Activated CD4-positive, alpha-beta memory T cell treated with anti-CD3 and anti-CD28 coated beads for 36 hours (primary cell): ENCODE measurements at regions of chr15 and their contacts with region 1.

Region 1: DNA sequence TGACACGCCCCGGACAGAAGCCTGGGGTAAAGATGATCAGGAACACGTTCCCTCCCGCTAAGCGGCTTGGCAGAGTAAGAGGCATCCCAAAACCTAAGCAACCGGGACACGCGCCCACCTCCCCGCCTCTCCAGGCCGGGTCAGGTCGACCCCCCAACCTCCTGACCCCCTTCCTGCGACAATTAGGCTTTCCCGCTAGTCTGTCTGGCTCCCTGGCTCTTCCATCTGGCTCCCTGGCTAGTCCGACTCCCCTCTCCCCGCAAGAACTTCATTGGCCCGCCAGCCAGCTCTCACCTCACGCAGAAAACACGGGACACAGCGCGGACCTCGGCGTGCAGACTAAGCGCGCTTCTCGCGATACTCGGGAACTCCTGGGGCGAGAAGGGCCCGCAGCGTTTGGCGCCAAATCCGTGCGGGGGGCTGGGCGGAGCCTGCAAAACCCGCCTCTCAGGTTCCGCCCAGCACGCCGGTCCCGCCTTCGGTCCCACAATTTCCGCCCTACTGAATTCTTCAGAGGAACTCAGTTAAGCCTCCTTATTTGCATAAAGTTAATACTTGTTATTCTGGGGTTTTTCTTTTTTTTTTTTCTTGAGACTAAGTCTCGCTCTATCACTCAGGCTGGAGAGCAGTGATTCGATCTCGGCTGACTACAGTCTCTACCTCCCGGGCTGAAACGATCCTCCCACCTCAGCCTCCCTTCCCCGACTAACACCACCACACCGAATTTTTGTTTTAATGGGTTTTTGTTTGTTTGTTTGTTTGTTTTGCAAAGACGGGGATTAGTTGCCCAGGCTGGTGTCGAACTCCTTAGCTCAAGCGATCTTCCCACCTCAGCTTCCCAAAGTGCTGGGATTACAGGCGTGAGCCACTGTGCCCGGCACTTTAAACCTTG is at the start of gene TIPIN:
- DNase-seq: peak; percentile 99
- H3K4me3 Mint-ChIP-seq: peak within 1 kb of the TSS; percentile 93
- H3K27ac Mint-ChIP-seq: peak within 1 kb of the TSS; percentile 91
- H3K4me1 Mint-ChIP-seq: peaks cover 25% of the 10 kb centered on the region
- H3K27me3 Mint-ChIP-seq: no peaks in the 10 kb centered on the region
- total RNA-seq, gene TIPIN: 43.2 to 45.9 TPM

Region 2: DNA sequence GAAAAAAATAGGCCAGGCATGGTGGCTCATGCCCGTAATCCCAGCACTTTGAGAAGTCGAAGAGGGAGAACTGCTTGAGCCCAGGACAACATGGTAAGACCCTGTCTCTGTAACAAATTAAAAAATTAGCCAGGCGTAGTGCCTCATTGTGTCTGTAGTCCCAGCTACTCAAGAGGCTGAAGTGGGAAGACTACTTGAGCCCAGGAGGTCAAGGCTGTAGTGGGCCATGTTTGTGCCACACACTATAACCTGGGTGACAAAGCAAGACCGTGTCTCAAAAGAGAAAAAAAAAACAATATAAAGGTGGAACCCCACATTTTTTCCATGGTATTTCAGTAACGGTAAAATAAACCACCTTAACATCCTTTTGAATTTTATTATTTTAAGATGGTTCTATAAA is 634.4 kb before region 1 on chr15:
- CTCF ChIA-PET with region 1: no interaction called
- POLR2A ChIA-PET with region 1: no interaction called
- intact Hi-C with region 1: no loop called
- DNase-seq: no peak
- H3K4me3 Mint-ChIP-seq: no peak overlapping the region
- H3K27ac Mint-ChIP-seq: no peak overlapping the region
- H3K4me1 Mint-ChIP-seq: no peaks in the 10 kb centered on the region
- H3K27me3 Mint-ChIP-seq: no peaks in the 10 kb centered on the region

Region 3: DNA sequence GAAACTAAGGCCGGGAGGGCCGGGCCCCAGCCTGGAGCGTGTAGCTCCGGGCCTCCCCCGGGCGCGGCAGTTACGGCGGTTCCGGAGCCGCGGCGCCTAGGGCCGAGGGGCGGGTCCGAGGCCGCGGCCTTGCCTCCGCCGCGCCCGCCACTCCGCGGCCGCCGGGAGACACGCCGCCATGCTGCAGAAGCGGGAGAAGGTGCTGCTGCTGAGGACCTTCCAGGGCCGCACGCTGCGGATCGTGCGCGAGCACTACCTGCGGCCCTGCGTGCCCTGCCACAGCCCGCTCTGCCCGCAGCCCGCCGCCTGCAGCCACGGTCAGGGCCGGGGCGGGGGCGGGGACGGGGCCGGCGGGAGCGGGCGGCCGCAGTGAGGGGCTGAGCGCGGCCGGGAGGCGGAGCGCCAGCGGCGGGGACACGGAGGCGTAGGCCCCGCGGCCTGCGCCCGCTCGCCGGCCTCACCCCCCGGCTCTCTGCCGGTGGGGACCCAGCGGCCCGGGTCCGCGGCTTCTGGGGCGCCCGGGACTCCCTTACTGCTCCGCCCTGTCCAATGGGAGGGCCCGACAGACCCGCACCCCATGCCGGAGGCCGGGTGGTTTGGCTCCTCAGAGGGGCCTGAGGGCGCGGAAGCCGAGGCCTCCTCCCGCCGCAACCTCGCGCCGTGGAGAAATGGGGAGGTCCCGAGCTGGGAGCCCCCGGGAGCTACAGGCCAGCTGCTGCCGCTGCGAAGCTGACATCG is 63.0 kb before region 1 on chr15 and contains the start of gene DIS3L:
- CTCF ChIA-PET with region 1: no interaction called
- POLR2A ChIA-PET with region 1: interaction called, 4 read pairs
- intact Hi-C with region 1: loop called (anchors 5 kb)
- DNase-seq: peak; percentile 68
- H3K4me3 Mint-ChIP-seq: peak within 1 kb of the TSS; percentile 84
- H3K27ac Mint-ChIP-seq: peak within 1 kb of the TSS; percentile 89
- H3K4me1 Mint-ChIP-seq: peaks cover 39% of the 10 kb centered on the region
- H3K27me3 Mint-ChIP-seq: no peaks in the 10 kb centered on the region
- total RNA-seq, gene DIS3L: 23.5 to 26.3 TPM

Region 4: GRCh38 chr15:66369773-66370651 is 13.4 kb after region 1 on chr15:
- CTCF ChIA-PET with region 1: no interaction called
- POLR2A ChIA-PET with region 1: interaction called, 7 read pairs
- intact Hi-C with region 1: loop called (anchors 1 kb)
- DNase-seq: peak; percentile 66
- H3K4me3 Mint-ChIP-seq: peak overlapping the region; percentile 69
- H3K27ac Mint-ChIP-seq: peak overlapping the region; percentile 98
- H3K4me1 Mint-ChIP-seq: peaks cover 15% of the 10 kb centered on the region
- H3K27me3 Mint-ChIP-seq: no peaks in the 10 kb centered on the region

Region 5: DNA sequence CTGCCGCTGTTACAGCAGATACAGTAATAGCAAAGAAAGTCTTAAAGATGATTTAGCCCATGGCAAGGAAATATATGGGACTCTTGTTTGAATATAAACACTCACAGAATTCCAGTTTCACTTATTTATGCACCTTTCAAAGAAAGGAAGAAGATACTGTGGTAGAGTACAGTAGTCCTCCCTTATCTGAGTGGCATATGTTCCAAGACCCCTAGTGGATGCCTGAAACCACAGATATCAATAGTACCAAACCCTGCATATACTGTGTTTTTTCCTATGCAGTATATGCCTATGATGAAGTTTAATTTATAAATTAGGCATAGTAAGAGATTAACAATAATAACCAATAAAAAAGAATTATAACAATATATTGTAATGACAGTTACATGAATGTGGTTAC is 38.3 kb after region 1 on chr15:
- CTCF ChIA-PET with region 1: no interaction called
- POLR2A ChIA-PET with region 1: no interaction called
- intact Hi-C with region 1: no loop called
- DNase-seq: no peak
- H3K4me3 Mint-ChIP-seq: no peak overlapping the region
- H3K27ac Mint-ChIP-seq: no peak overlapping the region
- H3K4me1 Mint-ChIP-seq: peaks cover 74% of the 10 kb centered on the region
- H3K27me3 Mint-ChIP-seq: no peaks in the 10 kb centered on the region

Region 6: GRCh38 chr15:66504563-66505429 is 148.2 kb after region 1 on chr15 and contains the starts of genes RPL4 and ZWILCH:
- CTCF ChIA-PET with region 1: interaction called, 43 read pairs
- POLR2A ChIA-PET with region 1: interaction called, 3 read pairs
- intact Hi-C with region 1: loop called (anchors 2 kb)
- DNase-seq: peak; percentile 82
- H3K4me3 Mint-ChIP-seq: peak within 1 kb of the TSS; percentile 95
- H3K27ac Mint-ChIP-seq: peak within 1 kb of the TSS; percentile 95
- H3K4me1 Mint-ChIP-seq: peaks cover 49% of the 10 kb centered on the region
- H3K27me3 Mint-ChIP-seq: no peaks in the 10 kb centered on the region
- total RNA-seq, gene RPL4: 5,151 to 5,211 TPM
- total RNA-seq, gene ZWILCH: 29.6 to 31.1 TPM

Region 7: DNA sequence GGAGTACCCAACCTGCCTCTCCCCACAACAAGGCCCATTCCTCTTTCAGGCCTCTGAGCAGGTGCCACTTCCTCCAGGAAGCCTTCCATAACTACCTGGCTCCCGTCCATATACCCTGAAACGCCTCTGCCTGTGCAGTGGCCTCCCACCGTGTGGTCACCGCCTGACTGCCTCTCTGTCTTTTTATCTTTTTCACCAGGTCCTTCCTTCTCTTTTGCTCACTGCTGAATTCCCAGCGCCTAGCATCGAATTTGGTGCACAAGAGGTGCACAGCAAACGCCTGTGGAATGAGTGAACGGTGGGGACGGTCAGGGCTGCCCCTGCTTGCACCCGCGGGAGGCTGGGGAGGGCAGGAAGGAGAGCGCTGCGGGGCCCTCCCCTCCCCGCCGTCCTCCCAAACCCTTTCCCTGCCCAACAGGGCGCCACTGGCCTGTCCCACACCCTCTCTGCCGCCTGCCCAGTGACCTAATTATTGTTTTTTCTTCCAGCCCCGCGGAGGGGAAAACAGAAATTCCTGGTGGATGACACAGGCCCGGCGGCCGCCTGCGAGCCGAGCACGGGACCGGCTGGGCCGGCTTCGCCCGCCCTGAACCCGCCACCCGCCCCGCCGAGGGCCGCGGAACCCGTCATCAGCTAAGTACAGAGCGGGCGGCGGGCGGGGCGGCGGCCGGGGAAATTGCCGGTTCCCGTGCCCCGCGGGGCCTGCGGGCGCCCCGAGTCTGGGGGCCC is 485.5 kb after region 1 on chr15:
- CTCF ChIA-PET with region 1: no interaction called
- POLR2A ChIA-PET with region 1: no interaction called
- intact Hi-C with region 1: no loop called
- DNase-seq: peak; percentile 31
- H3K4me3 Mint-ChIP-seq: no peak overlapping the region
- H3K27ac Mint-ChIP-seq: no peak overlapping the region
- H3K4me1 Mint-ChIP-seq: peaks cover 2% of the 10 kb centered on the region
- H3K27me3 Mint-ChIP-seq: peaks cover 32% of the 10 kb centered on the region